ENCODE measurements at regions of chr2 and their contacts with region 1.

Region 1: GRCh38 chr2:178478439-178479274 is at the start of gene FKBP7:
- DNase-seq: peak; percentile 85 to 93 (median 90)
- ATAC-seq: peak; percentile 83
- H3K4me3 ChIP-seq: peak within 1 kb of the TSS; percentile 57
- H3K27ac ChIP-seq: peak within 1 kb of the TSS; percentile 72
- H3K4me1 ChIP-seq: peaks cover 20 to 29% of the 10 kb centered on the region in 2 experiments
- H3K27me3 ChIP-seq: no peaks in the 10 kb centered on the region
- CTCF ChIP-seq: peak; percentile 94 to 97 (median 96)
- EP300 ChIP-seq: peak; percentile 25; the same call in 1 of the 2 replicates
- POLR2A ChIP-seq: peak; percentile 85
- RAD21 ChIP-seq: peak; percentile 73 to 90
- polyA plus RNA-seq, gene FKBP7: 19.3 to 23.2 TPM

Region 2: GRCh38 chr2:178306352-178307073 is 172.1 kb before region 1 on chr2:
- CTCF ChIA-PET with region 1: no interaction called
- POLR2A ChIA-PET with region 1: interaction called, 4 read pairs
- in situ Hi-C with region 1: no loop called
- intact Hi-C with region 1: loop called (anchors 5 kb)
- DNase-seq: peak; percentile 33 to 83 (median 56)
- ATAC-seq: peak; percentile 99
- H3K4me3 ChIP-seq: no peak overlapping the region
- H3K27ac ChIP-seq: no peak overlapping the region
- H3K4me1 ChIP-seq: peaks cover 0 to 6% of the 10 kb centered on the region in 2 experiments; a peak in 2 of 5 replicates
- H3K27me3 ChIP-seq: no peaks in the 10 kb centered on the region; a peak in 1 of 5 replicates
- CTCF ChIP-seq: peak; percentile 77 to 90 (median 86)
- EP300 ChIP-seq: no peak
- POLR2A ChIP-seq: no peak
- RAD21 ChIP-seq: peak; percentile 78 to 87

Region 3: DNA sequence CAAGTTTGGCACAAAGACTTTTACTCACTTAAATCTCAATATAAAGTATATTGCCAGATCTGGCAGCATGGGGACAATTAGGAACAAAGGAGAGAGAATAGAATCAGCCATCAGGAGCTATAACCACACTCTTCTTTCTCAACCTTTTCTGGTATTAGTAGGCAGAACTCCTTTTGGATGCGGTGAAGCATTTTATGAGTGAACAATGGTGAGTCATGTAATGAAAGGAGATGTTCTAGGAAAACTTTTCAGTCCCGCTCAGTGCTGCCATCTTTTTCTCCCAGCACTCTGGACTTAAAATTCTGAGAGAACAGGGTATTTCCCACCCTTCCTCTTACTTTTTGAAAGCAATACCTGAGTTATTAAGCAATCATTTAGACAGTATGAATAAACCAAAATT is 33.8 kb after region 1 on chr2:
- CTCF ChIA-PET with region 1: no interaction called
- POLR2A ChIA-PET with region 1: no interaction called
- in situ Hi-C with region 1: no loop called
- intact Hi-C with region 1: no loop called
- DNase-seq: no peak
- ATAC-seq: no peak
- H3K4me3 ChIP-seq: no peak overlapping the region
- H3K27ac ChIP-seq: no peak overlapping the region
- H3K4me1 ChIP-seq: no peaks in the 10 kb centered on the region
- H3K27me3 ChIP-seq: no peaks in the 10 kb centered on the region
- CTCF ChIP-seq: no peak
- EP300 ChIP-seq: no peak
- POLR2A ChIP-seq: no peak
- RAD21 ChIP-seq: no peak

Region 4: GRCh38 chr2:178522950-178523595 is 44.4 kb after region 1 on chr2:
- CTCF ChIA-PET with region 1: interaction called, 5 read pairs
- POLR2A ChIA-PET with region 1: interaction called, 4 read pairs
- in situ Hi-C with region 1: no loop called
- intact Hi-C with region 1: loop called (anchors 1 kb)
- DNase-seq: peak; percentile 92 to 97 (median 95)
- ATAC-seq: peak; percentile 99
- H3K4me3 ChIP-seq: peak overlapping the region; percentile 54
- H3K27ac ChIP-seq: peak overlapping the region; percentile 76
- H3K4me1 ChIP-seq: peaks cover 0 to 2% of the 10 kb centered on the region in 2 experiments; a peak in 1 of 5 replicates
- H3K27me3 ChIP-seq: no peaks in the 10 kb centered on the region
- CTCF ChIP-seq: peak; percentile 88 to 99 (median 97)
- EP300 ChIP-seq: peak; percentile 57
- POLR2A ChIP-seq: peak; percentile 95
- RAD21 ChIP-seq: peak; percentile 54 to 63

Region 5: DNA sequence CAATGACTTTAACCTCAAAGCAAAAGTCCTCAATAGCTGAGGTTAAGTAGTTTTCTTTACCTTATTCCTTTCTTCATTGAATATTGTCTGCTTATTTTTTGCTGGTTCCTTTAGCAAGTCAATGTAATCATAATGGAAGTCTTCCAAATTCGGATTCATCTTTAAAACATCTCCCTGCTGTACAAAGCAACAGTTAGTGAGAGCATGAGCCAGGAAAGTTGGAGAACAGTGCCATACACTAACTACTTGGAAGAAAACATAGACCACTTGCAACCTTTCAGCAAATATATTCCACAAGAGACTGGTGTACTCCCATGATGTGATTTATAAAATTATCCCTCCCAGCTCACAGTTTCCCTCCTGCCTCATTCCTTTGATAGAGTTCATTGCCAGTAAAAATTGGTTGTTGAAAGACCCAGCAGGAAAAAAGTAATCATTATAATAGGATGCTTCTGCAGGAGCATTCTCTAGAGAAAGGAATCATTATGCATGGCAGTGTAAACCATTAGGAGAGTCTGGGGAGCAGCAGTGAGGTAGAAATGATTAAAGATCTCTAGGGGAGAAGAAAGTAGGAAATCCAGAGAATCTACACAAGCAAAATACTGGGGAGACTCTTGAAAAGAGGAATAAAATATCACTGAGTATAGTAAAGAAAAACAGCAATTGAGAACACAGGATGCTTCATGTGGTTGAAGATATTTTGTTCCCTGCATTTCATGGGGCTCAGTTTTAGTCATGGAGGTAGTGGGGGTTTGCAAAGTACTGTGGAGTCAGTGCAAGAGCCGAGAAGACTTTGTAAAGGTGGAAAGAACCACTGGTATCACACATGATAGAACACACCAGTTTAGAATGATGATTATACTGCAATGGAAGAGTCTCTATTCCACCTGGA is 367.2 kb after region 1 on chr2:
- CTCF ChIA-PET with region 1: no interaction called
- POLR2A ChIA-PET with region 1: no interaction called
- in situ Hi-C with region 1: no loop called
- intact Hi-C with region 1: no loop called
- DNase-seq: no peak
- ATAC-seq: no peak
- H3K4me3 ChIP-seq: no peak overlapping the region
- H3K27ac ChIP-seq: no peak overlapping the region
- H3K4me1 ChIP-seq: no peaks in the 10 kb centered on the region
- H3K27me3 ChIP-seq: no peaks in the 10 kb centered on the region
- CTCF ChIP-seq: no peak
- EP300 ChIP-seq: no peak
- POLR2A ChIP-seq: no peak
- RAD21 ChIP-seq: no peak

Region 6: GRCh38 chr2:178914259-178914849 is 435.7 kb after region 1 on chr2:
- CTCF ChIA-PET with region 1: no interaction called
- POLR2A ChIA-PET with region 1: no interaction called
- in situ Hi-C with region 1: no loop called
- intact Hi-C with region 1: loop called (anchors 2 kb)
- DNase-seq: peak; percentile 65 to 83 (median 72)
- ATAC-seq: peak; percentile 99
- H3K4me3 ChIP-seq: no peak overlapping the region
- H3K27ac ChIP-seq: no peak overlapping the region
- H3K4me1 ChIP-seq: no peaks in the 10 kb centered on the region
- H3K27me3 ChIP-seq: no peaks in the 10 kb centered on the region
- CTCF ChIP-seq: peak; percentile 85 to 89 (median 87)
- EP300 ChIP-seq: no peak
- POLR2A ChIP-seq: no peak
- RAD21 ChIP-seq: peak; percentile 77 to 85

Measured in K562 (cell line).